ENCODE measurements at regions of chr4 and their contacts with region 1.

Region 1: DNA sequence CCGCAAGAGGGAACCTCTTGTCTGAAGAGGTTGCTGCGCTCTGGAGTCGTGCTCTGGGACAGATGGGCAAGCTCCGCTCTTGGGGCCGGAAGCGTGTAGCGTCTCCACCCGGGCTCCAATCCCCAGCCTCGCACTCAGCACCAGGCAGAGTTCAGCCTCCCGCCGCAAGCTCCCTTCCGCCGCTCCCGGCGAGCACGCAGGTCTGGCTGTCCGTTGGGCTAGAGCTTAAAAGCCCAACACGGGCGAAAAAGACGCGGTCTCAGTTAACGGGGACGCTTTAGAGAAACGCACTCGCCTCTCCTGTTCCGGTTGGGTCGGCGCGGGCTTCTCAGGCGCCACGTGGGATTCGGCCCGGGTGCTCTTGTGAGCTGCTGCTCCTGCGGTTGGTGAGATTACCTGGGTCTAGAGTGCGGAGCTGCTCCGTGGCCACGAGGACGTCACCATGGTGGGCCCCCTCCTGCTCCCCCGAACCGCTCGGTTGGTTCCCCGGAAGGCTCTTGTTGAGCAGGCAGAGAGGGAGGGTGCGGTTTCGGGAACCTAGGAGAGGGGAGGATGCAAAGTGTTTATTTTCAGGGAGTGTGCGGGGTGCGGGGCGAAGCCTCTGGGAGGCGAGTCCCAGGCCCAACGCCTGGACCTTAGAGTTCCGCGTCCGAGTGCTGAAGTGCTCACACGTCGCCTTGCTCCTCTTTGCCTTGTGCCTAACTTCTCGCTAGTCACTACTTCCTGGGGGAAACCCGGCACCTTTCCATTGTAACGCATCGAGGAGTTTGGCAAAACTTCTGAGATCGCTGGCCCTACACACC is at the start of gene TMA16:
- DNase-seq: peak; percentile 91
- ATAC-seq: peak; percentile 91
- H3K4me3 Mint-ChIP-seq: peak within 1 kb of the TSS; percentile 100
- H3K27ac Mint-ChIP-seq: peak within 1 kb of the TSS; percentile 99
- H3K4me1 Mint-ChIP-seq: peaks cover 26% of the 10 kb centered on the region
- H3K27me3 Mint-ChIP-seq: no peaks in the 10 kb centered on the region
- CTCF ChIP-seq: no peak
- total RNA-seq, gene TMA16: 53.5 to 58.4 TPM

Region 2: DNA sequence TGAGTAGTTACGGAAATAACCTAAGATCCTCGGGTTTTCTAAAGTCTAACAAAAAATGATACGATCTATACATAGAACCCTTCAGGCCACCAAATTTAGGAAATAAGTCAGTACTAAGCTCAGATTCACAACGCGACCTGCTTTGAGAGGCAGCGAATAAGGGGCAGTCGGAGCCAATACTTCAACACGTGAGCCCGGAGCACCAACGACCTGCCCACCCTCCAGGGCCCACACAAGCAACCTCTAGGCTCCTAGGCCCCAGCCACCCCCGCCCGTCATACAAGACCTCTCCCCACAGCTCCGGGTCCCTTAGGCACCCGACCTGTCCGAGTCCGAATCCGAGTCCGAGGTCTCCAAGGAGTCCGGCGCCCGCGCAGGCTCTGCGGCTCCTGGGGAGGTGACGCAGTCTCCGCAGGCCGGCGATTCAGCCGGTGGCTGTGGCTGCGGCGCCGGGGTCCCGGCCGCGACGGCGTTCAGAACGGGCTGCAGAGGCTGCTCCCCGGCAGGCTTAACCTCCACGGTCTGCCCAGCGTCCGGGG is 328.5 kb before region 1 on chr4:
- CTCF ChIA-PET with region 1: no interaction called
- POLR2A ChIA-PET with region 1: interaction called, 7 read pairs
- intact Hi-C with region 1: loop called (anchors 5 kb)
- DNase-seq: peak; percentile 73
- ATAC-seq: peak; percentile 63
- H3K4me3 Mint-ChIP-seq: peak overlapping the region; percentile 81
- H3K27ac Mint-ChIP-seq: peak overlapping the region; percentile 94
- H3K4me1 Mint-ChIP-seq: peaks cover 42% of the 10 kb centered on the region
- H3K27me3 Mint-ChIP-seq: no peaks in the 10 kb centered on the region
- CTCF ChIP-seq: no peak

Region 3: GRCh38 chr4:163515198-163515597 is 20.6 kb after region 1 on chr4:
- CTCF ChIA-PET with region 1: no interaction called
- POLR2A ChIA-PET with region 1: no interaction called
- intact Hi-C with region 1: no loop called
- DNase-seq: no peak
- ATAC-seq: no peak
- H3K4me3 Mint-ChIP-seq: no peak overlapping the region
- H3K27ac Mint-ChIP-seq: no peak overlapping the region
- H3K4me1 Mint-ChIP-seq: no peaks in the 10 kb centered on the region
- H3K27me3 Mint-ChIP-seq: no peaks in the 10 kb centered on the region
- CTCF ChIP-seq: no peak

Measured in activated CD8-positive, alpha-beta T cell treated with anti-CD3 and anti-CD28 coated beads for 36 hours (primary cell).